ENCODE measurements at regions of chr12 and their contacts with region 1.

Region 1: DNA sequence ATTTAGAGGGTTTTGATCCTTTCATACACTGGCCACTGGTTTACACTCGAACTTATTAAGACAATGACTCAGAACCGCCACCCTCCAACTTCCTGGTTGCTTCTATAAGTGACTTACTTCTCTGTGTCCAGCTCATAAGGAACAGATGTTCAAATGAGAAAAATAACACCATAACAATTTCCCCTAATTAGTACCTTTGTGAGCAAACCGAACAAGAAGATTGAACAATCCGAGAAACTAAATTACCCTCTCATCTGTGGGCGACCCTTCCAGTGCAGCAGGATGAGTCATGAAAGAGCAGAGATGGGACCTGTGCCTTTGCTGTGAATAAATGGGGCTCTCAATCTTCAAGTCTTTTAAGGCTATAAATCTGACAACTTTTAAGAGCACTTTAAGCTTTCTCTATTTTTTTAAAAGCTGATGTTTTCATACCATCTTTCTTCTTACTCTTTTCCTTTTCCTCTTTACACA is 146.8 kb upstream of the RASSF8 start:
- DNase-seq: peak; percentile 69
- ATAC-seq: peak; percentile 59
- H3K4me3 ChIP-seq: peak overlapping the region; percentile 19
- H3K27ac ChIP-seq: peak overlapping the region; percentile 85
- H3K4me1 ChIP-seq: peaks cover 43% of the 10 kb centered on the region
- H3K27me3 ChIP-seq: no peaks in the 10 kb centered on the region
- CTCF ChIP-seq: no peak

Region 2: GRCh38 chr12:25436203-25437030 is 375.3 kb before region 1 on chr12:
- CTCF ChIA-PET with region 1: no interaction called
- POLR2A ChIA-PET with region 1: no interaction called
- intact Hi-C with region 1: loop called (anchors 10 kb)
- DNase-seq: peak; percentile 84
- ATAC-seq: peak; percentile 69
- H3K4me3 ChIP-seq: peak overlapping the region; percentile 82
- H3K27ac ChIP-seq: no peak overlapping the region
- H3K4me1 ChIP-seq: peaks cover 20% of the 10 kb centered on the region
- H3K27me3 ChIP-seq: no peaks in the 10 kb centered on the region
- CTCF ChIP-seq: peak; percentile 93

Region 3: GRCh38 chr12:25769076-25769945 is 42.4 kb before region 1 on chr12:
- CTCF ChIA-PET with region 1: no interaction called
- POLR2A ChIA-PET with region 1: no interaction called
- intact Hi-C with region 1: loop called (anchors 10 kb)
- DNase-seq: peak; percentile 92
- ATAC-seq: peak; percentile 98
- H3K4me3 ChIP-seq: no peak overlapping the region
- H3K27ac ChIP-seq: peak overlapping the region; percentile 40
- H3K4me1 ChIP-seq: peaks cover 28% of the 10 kb centered on the region
- H3K27me3 ChIP-seq: no peaks in the 10 kb centered on the region
- CTCF ChIP-seq: no peak

Region 4: GRCh38 chr12:25852791-25853190 is 41.1 kb after region 1 on chr12:
- CTCF ChIA-PET with region 1: no interaction called
- POLR2A ChIA-PET with region 1: interaction called, 3 read pairs
- intact Hi-C with region 1: loop called (anchors 2 kb)
- DNase-seq: peak; percentile 95
- ATAC-seq: peak; percentile 100
- H3K4me3 ChIP-seq: no peak overlapping the region
- H3K27ac ChIP-seq: peak overlapping the region; percentile 66
- H3K4me1 ChIP-seq: peaks cover 26% of the 10 kb centered on the region
- H3K27me3 ChIP-seq: no peaks in the 10 kb centered on the region
- CTCF ChIP-seq: no peak

Region 5: GRCh38 chr12:25875666-25876065 is 64.0 kb after region 1 on chr12:
- CTCF ChIA-PET with region 1: no interaction called
- POLR2A ChIA-PET with region 1: no interaction called
- intact Hi-C with region 1: no loop called
- DNase-seq: no peak
- ATAC-seq: no peak
- H3K4me3 ChIP-seq: no peak overlapping the region
- H3K27ac ChIP-seq: no peak overlapping the region
- H3K4me1 ChIP-seq: peaks cover 23% of the 10 kb centered on the region
- H3K27me3 ChIP-seq: no peaks in the 10 kb centered on the region
- CTCF ChIP-seq: no peak

Region 6: GRCh38 chr12:25942709-25943108 is 131.0 kb after region 1 on chr12:
- CTCF ChIA-PET with region 1: no interaction called
- POLR2A ChIA-PET with region 1: no interaction called
- intact Hi-C with region 1: no loop called
- DNase-seq: no peak
- ATAC-seq: no peak
- H3K4me3 ChIP-seq: no peak overlapping the region
- H3K27ac ChIP-seq: no peak overlapping the region
- H3K4me1 ChIP-seq: no peaks in the 10 kb centered on the region
- H3K27me3 ChIP-seq: no peaks in the 10 kb centered on the region
- CTCF ChIP-seq: no peak

Region 7: DNA sequence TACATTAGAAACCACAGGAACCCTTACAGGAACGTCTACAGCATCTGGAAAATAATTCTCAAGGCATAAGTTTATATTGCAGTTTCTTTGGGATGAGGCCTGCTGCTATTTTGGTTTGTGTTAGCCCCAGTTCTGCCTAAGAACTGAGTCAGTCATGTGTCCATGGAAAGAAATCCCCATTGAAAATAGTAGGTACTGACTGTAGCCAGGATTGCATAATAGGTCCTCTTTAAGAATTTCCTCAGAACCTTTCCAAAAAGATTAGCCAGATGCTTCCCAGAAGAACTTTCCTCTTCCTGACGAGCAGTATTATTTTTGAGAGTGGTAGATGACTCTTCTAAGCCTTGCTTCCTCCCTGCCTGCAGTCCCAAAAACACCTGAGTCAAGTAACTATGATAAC is 199.4 kb after region 1 on chr12:
- CTCF ChIA-PET with region 1: no interaction called
- POLR2A ChIA-PET with region 1: no interaction called
- intact Hi-C with region 1: no loop called
- DNase-seq: no peak
- ATAC-seq: no peak
- H3K4me3 ChIP-seq: no peak overlapping the region
- H3K27ac ChIP-seq: no peak overlapping the region; the same call in 1 of the 2 replicates
- H3K4me1 ChIP-seq: peaks cover 21% of the 10 kb centered on the region
- H3K27me3 ChIP-seq: no peaks in the 10 kb centered on the region
- CTCF ChIP-seq: no peak

Region 8: GRCh38 chr12:26028953-26029735 is 217.5 kb after region 1 on chr12:
- CTCF ChIA-PET with region 1: no interaction called
- POLR2A ChIA-PET with region 1: no interaction called
- intact Hi-C with region 1: loop called (anchors 2 kb)
- DNase-seq: peak; percentile 85
- ATAC-seq: peak; percentile 56
- H3K4me3 ChIP-seq: no peak overlapping the region
- H3K27ac ChIP-seq: no peak overlapping the region
- H3K4me1 ChIP-seq: peaks cover 29% of the 10 kb centered on the region
- H3K27me3 ChIP-seq: no peaks in the 10 kb centered on the region
- CTCF ChIP-seq: peak; percentile 97

Region 9: DNA sequence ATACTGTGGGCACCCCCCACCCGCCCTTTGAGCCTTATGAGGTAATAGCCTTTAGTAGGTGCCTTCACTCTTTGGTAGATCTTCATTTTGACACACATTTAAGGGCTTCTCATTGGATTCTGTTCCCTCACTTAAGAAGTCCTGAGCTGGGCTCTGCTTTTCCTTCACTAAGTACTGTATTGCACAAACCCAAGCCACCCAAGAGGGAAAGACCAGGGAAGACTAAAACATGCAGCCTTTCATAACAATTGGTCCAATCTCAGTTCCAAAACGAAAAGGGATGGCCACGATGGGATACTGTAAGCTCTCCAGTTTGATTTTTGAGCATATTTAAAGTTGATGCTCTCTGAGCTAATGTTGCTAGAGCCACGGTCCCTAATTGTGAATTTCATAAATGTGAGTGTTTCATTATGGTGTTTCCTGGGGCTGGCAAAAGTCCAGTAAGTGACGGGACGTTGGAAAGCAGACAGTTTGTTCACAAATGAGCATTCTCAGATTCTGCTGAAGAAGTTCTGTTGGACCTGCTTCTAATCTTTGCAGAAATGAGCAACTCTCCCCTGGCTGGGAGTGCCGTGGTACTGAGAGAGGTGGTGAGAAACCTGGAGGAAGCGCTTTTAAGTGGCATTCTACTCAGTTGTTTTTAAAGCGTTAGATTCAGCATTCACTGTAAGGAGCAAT is 393.1 kb after region 1 on chr12:
- CTCF ChIA-PET with region 1: no interaction called
- POLR2A ChIA-PET with region 1: no interaction called
- intact Hi-C with region 1: no loop called
- DNase-seq: no peak
- ATAC-seq: no peak
- H3K4me3 ChIP-seq: no peak overlapping the region
- H3K27ac ChIP-seq: no peak overlapping the region
- H3K4me1 ChIP-seq: no peaks in the 10 kb centered on the region
- H3K27me3 ChIP-seq: no peaks in the 10 kb centered on the region
- CTCF ChIP-seq: no peak